Heart left ventricle (tissue), 16 donors: ENCODE measurements at regions of chrX and their contacts with region 1.

Region 1: GRCh38 chrX:74550295-74550802 is 64.1 kb downstream of the RLIM start:
- DNase-seq: peak; percentile 78 to 88 (median 81)
- ATAC-seq: peak; percentile 71 to 95 (median 90)
- H3K4me3 ChIP-seq: peak overlapping the region in 3 of 12 donors; percentile 8 to 32 (median 25)
- H3K27ac ChIP-seq: peak overlapping the region in 1 of 12 donors; percentile 15
- H3K4me1 ChIP-seq: no peaks in the 10 kb centered on the region
- H3K27me3 ChIP-seq: peaks cover 0 to 10% (median 0%) of the 10 kb centered on the region in 9 donors
- CTCF ChIP-seq: peak; percentile 88 to 99 (median 95)
- POLR2A ChIP-seq: no peak

Region 2: DNA sequence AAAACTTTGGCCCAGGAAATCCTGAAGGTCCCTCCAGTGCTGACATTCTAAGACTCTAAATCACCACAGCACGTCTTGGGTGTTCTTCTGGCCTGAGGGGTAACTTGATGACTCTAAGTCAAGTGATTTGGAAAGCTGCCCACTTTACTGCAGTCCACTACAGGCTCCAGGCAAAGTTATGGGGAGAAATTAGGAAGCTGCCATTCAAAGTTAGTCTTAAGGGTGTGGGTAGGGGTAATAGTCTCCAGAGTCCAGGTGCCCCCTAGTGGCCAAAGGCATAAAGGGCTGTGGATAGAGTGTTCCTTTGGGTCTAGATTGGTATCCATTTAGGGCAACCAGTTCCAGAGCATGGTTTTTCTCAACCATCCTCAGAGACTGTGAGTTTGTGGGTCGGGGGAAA is 167.7 kb before region 1 on chrX:
- intact Hi-C with region 1: loop called in 8 of 10 experiments (anchors 1 to 10 kb)
- DNase-seq: peak in 4 of 5 donors; percentile 27 to 66 (median 42)
- ATAC-seq: peak; percentile 77 to 90 (median 85)
- H3K4me3 ChIP-seq: no peak overlapping the region
- H3K27ac ChIP-seq: no peak overlapping the region
- H3K4me1 ChIP-seq: no peaks in the 10 kb centered on the region
- H3K27me3 ChIP-seq: peaks cover 0 to 25% (median 0%) of the 10 kb centered on the region in 9 donors
- CTCF ChIP-seq: peak; percentile 49 to 82 (median 65)
- POLR2A ChIP-seq: no peak

Region 3: DNA sequence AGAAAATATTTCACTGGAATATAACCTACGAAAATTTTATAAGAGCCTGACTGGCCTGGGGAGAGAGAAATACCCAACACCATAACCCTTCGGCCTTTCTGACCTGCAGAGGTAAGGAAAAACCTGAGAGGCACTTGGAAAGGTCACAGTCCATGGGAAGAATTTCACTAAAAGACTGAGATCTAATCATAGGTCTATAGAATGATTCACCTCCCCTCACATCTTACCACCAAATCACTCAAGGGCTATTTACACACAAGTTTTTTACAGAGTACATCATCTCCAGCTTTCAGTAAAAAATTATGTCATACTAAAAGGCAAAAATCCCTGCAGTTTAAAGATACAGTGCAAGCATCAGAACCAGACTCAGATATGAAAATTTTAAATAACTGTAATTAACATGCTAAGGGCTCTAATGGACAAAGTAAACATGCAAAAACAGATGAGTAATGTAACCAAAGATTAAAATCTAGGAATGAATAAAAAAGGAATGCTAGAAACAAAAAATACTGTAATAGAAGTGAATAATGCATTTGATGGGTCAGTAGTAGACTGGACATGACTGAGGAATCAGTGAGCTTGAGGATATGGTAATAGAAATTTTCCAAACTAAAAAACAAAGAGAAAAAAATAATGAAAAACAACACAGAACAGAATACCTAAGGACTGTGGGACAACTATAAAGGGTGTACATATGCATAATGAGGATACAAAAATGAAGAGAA is 161.2 kb before region 1 on chrX:
- intact Hi-C with region 1: loop called in 3 of 10 experiments (anchors 5 to 10 kb)
- DNase-seq: no peak
- ATAC-seq: no peak
- H3K4me3 ChIP-seq: no peak overlapping the region
- H3K27ac ChIP-seq: no peak overlapping the region
- H3K4me1 ChIP-seq: no peaks in the 10 kb centered on the region
- H3K27me3 ChIP-seq: peaks cover 0 to 41% (median 0%) of the 10 kb centered on the region in 9 donors
- CTCF ChIP-seq: no peak
- POLR2A ChIP-seq: no peak

Region 4: GRCh38 chrX:74680391-74680790 is 130.0 kb after region 1 on chrX:
- intact Hi-C with region 1: no loop called
- DNase-seq: no peak
- ATAC-seq: no peak
- H3K4me3 ChIP-seq: no peak overlapping the region
- H3K27ac ChIP-seq: no peak overlapping the region
- H3K4me1 ChIP-seq: no peaks in the 10 kb centered on the region
- H3K27me3 ChIP-seq: peaks cover 0 to 6% (median 0%) of the 10 kb centered on the region in 9 donors
- CTCF ChIP-seq: no peak
- POLR2A ChIP-seq: no peak

Region 5: GRCh38 chrX:75045369-75045768 is 495.0 kb after region 1 on chrX:
- intact Hi-C with region 1: no loop called
- DNase-seq: no peak
- ATAC-seq: no peak
- H3K4me3 ChIP-seq: no peak overlapping the region
- H3K27ac ChIP-seq: no peak overlapping the region
- H3K4me1 ChIP-seq: no peaks in the 10 kb centered on the region
- H3K27me3 ChIP-seq: no peaks in the 10 kb centered on the region
- CTCF ChIP-seq: no peak
- POLR2A ChIP-seq: no peak